MCF 10A (cell line): ENCODE measurements at regions of chr12 and their contacts with region 1.

Region 1: GRCh38 chr12:52023182-52023975 is 16.6 kb downstream of the TAMALIN start:
- DNase-seq: peak; percentile 64
- H3K4me3 Mint-ChIP-seq: peak overlapping the region; percentile 78
- H3K27ac Mint-ChIP-seq: peak overlapping the region; percentile 23
- H3K4me1 Mint-ChIP-seq: peaks cover 11% of the 10 kb centered on the region
- H3K27me3 Mint-ChIP-seq: peaks cover 12% of the 10 kb centered on the region
- CTCF ChIP-seq: peak; percentile 86

Region 2: DNA sequence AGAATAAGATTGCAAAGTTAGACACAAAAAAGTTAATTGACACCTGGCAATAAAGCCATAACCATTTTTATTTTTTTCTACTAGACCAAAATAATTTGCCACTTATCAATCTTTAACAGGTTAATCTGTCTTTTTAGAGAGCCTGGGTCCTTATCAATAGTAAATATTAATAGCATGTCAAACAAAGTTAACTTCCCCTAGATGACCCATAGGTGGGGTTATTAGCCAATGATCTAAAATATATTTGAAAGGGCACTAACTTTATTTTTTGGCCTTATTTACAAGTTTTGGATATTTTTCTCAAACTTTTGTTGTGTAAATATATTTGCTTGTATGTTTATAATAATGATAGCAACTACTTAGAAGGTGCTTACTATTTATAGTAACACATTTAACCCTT is 131.5 kb before region 1 on chr12:
- CTCF ChIA-PET with region 1: interaction called, 4 read pairs
- POLR2A ChIA-PET with region 1: no interaction called
- intact Hi-C with region 1: loop called (anchors 2 kb)
- DNase-seq: no peak
- H3K4me3 Mint-ChIP-seq: no peak overlapping the region
- H3K27ac Mint-ChIP-seq: no peak overlapping the region
- H3K4me1 Mint-ChIP-seq: no peaks in the 10 kb centered on the region
- H3K27me3 Mint-ChIP-seq: no peaks in the 10 kb centered on the region
- CTCF ChIP-seq: peak; percentile 36

Region 3: GRCh38 chr12:51941011-51941581 is 82.3 kb before region 1 on chr12:
- CTCF ChIA-PET with region 1: interaction called, 10 read pairs
- POLR2A ChIA-PET with region 1: no interaction called
- intact Hi-C with region 1: no loop called
- DNase-seq: no peak
- H3K4me3 Mint-ChIP-seq: no peak overlapping the region
- H3K27ac Mint-ChIP-seq: no peak overlapping the region
- H3K4me1 Mint-ChIP-seq: peaks cover 7% of the 10 kb centered on the region
- H3K27me3 Mint-ChIP-seq: no peaks in the 10 kb centered on the region
- CTCF ChIP-seq: no peak

Region 4: GRCh38 chr12:52004042-52004648 is 19.2 kb before region 1 on chr12:
- CTCF ChIA-PET with region 1: interaction called, 258 read pairs
- POLR2A ChIA-PET with region 1: interaction called, 3 read pairs
- intact Hi-C with region 1: loop called (anchors 1 kb)
- DNase-seq: peak; percentile 60
- H3K4me3 Mint-ChIP-seq: no peak overlapping the region
- H3K27ac Mint-ChIP-seq: no peak overlapping the region
- H3K4me1 Mint-ChIP-seq: no peaks in the 10 kb centered on the region
- H3K27me3 Mint-ChIP-seq: peaks cover 20% of the 10 kb centered on the region
- CTCF ChIP-seq: peak; percentile 52

Region 5: GRCh38 chr12:52044261-52044983 is 21.0 kb after region 1 on chr12:
- CTCF ChIA-PET with region 1: interaction called, 34 read pairs
- POLR2A ChIA-PET with region 1: interaction called, 3 read pairs
- intact Hi-C with region 1: no loop called
- DNase-seq: no peak
- H3K4me3 Mint-ChIP-seq: no peak overlapping the region
- H3K27ac Mint-ChIP-seq: no peak overlapping the region
- H3K4me1 Mint-ChIP-seq: peaks cover 10% of the 10 kb centered on the region
- H3K27me3 Mint-ChIP-seq: peaks cover 7% of the 10 kb centered on the region
- CTCF ChIP-seq: no peak

Region 6: DNA sequence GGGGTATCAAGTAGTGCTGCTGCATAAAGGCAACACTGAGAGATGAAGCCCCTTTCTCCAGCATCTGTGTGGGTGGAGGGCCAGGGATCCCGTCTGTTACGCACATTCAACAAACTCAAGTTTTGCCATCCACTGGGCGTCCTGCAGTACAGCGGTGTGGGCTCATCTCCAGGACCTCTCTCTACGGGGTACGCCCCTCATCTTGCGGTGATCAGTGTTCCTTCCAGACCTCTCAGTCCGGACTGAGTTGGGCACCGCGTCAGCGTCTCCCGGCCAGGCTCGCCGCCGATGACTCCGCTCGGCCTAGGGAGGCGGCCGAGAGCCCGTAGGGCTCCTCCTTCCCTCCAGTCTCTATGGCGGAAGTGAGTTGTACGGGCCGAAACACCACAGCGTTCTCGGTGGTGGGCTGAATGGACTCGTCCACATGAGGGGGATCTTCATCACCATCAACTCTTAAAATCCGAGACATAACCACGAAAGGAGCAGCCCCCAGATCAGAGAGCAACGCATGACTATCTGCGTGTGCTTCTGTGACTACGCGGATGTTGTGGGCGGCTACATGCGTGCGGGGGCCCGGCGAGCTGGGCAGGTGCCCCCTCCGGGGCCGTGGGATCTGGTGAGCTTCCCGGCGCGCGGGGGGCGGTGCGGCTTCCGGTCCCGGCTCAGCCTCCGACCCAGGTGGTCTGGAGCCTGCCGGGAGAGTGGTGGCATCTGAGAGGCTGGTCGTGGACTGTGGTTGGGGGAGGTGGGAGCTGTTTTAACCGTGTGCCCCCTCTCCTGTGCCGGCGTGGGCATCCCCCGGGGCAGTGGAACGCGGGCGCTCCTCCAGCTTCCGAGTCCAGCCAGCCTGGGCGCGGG is 46.2 kb after region 1 on chr12 and contains the start of gene ATG101:
- CTCF ChIA-PET with region 1: interaction called, 560 read pairs
- POLR2A ChIA-PET with region 1: interaction called, 33 read pairs
- intact Hi-C with region 1: loop called (anchors 1 kb)
- DNase-seq: peak; percentile 95
- H3K4me3 Mint-ChIP-seq: peak within 1 kb of the TSS; percentile 96
- H3K27ac Mint-ChIP-seq: peak within 1 kb of the TSS; percentile 99
- H3K4me1 Mint-ChIP-seq: peaks cover 22% of the 10 kb centered on the region
- H3K27me3 Mint-ChIP-seq: peaks cover 20% of the 10 kb centered on the region
- CTCF ChIP-seq: peak; percentile 41
- total RNA-seq, gene ATG101: 64.2 and 66.9 TPM in 2 replicates

Region 7: GRCh38 chr12:52121824-52122539 is 98.6 kb after region 1 on chr12:
- CTCF ChIA-PET with region 1: interaction called, 118 read pairs
- POLR2A ChIA-PET with region 1: interaction called, 4 read pairs
- intact Hi-C with region 1: loop called (anchors 1 kb)
- DNase-seq: peak; percentile 48
- H3K4me3 Mint-ChIP-seq: no peak overlapping the region
- H3K27ac Mint-ChIP-seq: no peak overlapping the region
- H3K4me1 Mint-ChIP-seq: no peaks in the 10 kb centered on the region
- H3K27me3 Mint-ChIP-seq: no peaks in the 10 kb centered on the region
- CTCF ChIP-seq: peak; percentile 77